Mammary epithelial cell (primary cell): ENCODE measurements at regions of chr11 and their contacts with region 1.

Region 1: DNA sequence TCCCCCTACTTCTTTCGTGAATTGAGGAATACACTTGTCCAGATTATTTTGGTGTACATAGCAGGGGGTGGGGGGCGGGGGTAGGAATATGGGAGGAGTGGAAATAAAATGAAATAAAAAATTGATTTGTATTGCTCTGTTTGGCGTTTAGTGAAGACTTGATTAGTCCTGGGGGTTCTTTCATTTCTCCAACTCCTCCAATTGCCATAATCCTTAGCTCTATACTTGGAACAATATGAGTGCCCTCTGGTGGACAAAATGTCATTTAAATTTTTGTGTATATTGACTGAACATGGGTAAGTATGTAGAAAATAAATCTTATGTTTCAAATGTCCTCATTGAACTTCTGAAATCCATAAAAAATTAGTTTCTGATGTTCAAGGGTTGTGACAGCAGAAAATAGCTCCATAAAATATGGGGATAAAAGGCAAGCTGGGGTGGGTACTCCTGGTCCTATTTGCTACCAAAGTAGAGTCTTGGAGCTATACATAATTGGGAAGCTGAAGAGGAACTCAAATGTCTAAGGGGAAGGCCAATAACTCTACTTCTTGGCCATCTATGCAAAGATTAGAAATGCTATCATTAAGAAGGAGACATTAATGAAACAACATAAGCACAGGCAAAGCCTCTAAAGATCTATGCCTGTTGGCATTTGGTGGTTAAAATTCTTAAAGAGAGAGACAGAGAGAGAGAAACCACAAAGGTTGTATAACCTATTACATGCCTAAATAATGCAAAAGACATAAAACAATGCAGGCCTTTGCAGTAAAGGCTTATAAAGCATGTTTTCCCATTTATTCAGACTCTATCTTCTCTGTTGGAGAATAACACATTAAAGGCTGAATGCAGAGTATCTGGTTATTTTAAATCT is 421.6 kb downstream of the METTL15 start:
- DNase-seq: peak; percentile 42
- H3K4me3 ChIP-seq: no peak overlapping the region
- H3K27ac ChIP-seq: no peak overlapping the region
- H3K4me1 ChIP-seq: no peaks in the 10 kb centered on the region
- H3K27me3 ChIP-seq: no peaks in the 10 kb centered on the region
- CTCF ChIP-seq: peak; percentile 41 to 54

Region 2: GRCh38 chr11:27705873-27706820 is 823.6 kb before region 1 on chr11:
- CTCF ChIA-PET with region 1: no interaction called
- dilution Hi-C with region 1: no loop called
- in situ Hi-C with region 1: loop called in 1 of 2 experiments (anchors 25 kb)
- intact Hi-C with region 1: no loop called
- DNase-seq: no peak
- H3K4me3 ChIP-seq: no peak overlapping the region
- H3K27ac ChIP-seq: no peak overlapping the region
- H3K4me1 ChIP-seq: peaks cover under 1% of the 10 kb centered on the region
- H3K27me3 ChIP-seq: peaks cover 3% of the 10 kb centered on the region
- CTCF ChIP-seq: peak; percentile 75 to 76

Region 3: GRCh38 chr11:27839226-27839870 is 690.4 kb before region 1 on chr11:
- CTCF ChIA-PET with region 1: no interaction called
- dilution Hi-C with region 1: no loop called
- in situ Hi-C with region 1: no loop called
- intact Hi-C with region 1: loop called (anchors 5 kb)
- DNase-seq: no peak
- H3K4me3 ChIP-seq: no peak overlapping the region
- H3K27ac ChIP-seq: no peak overlapping the region
- H3K4me1 ChIP-seq: no peaks in the 10 kb centered on the region
- H3K27me3 ChIP-seq: no peaks in the 10 kb centered on the region
- CTCF ChIP-seq: peak; percentile 49 to 54

Region 4: DNA sequence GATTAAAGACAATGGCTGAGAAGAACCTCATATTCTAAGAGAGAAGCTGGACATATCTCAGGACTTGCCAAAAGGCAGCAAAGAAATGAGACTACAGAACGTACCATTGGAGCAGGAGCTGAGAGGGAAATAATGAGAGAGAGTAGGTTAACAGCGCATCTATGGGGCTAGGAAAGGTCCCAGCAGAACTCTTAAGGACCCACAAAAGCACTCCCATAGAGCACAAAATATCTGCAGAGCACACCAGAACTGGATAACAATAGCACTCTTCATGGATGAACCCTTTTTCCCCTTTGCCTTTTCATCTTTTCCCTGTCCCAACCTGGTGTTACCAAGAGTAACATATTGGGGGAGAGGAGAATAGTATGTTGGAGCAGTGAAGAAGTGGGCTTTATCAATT is 175.8 kb before region 1 on chr11:
- CTCF ChIA-PET with region 1: interaction called, 18 read pairs
- dilution Hi-C with region 1: no loop called
- in situ Hi-C with region 1: no loop called
- intact Hi-C with region 1: no loop called
- DNase-seq: no peak
- H3K4me3 ChIP-seq: no peak overlapping the region
- H3K27ac ChIP-seq: no peak overlapping the region
- H3K4me1 ChIP-seq: no peaks in the 10 kb centered on the region
- H3K27me3 ChIP-seq: no peaks in the 10 kb centered on the region
- CTCF ChIP-seq: no peak

Region 5: GRCh38 chr11:28417601-28418323 is 112.0 kb before region 1 on chr11:
- CTCF ChIA-PET with region 1: no interaction called
- dilution Hi-C with region 1: no loop called
- in situ Hi-C with region 1: no loop called
- intact Hi-C with region 1: no loop called
- DNase-seq: no peak
- H3K4me3 ChIP-seq: no peak overlapping the region
- H3K27ac ChIP-seq: no peak overlapping the region
- H3K4me1 ChIP-seq: no peaks in the 10 kb centered on the region
- H3K27me3 ChIP-seq: peaks cover 2% of the 10 kb centered on the region
- CTCF ChIP-seq: no peak

Region 6: DNA sequence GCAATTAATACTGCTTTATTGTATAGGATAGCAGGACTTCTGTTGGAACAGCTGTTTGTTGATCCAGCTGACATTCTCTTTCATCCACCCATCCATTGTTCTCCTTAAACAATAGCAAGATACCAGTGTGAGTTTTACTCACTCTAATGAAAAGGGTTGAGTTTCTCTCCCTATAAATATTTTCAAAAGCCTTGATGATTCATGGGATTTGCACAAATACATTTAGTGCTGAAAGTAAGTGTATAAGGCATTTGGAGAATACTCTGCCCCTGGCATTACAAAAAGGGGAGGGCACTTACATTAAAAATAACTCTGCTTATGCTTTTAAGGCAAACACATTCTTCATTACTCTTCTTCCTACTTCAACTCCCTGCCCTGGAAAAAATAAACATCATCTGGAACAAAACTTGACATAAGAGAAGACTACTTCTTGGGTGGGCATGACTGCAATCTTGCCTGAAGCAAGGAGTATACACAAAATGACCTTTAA is 213.3 kb after region 1 on chr11:
- CTCF ChIA-PET with region 1: no interaction called
- dilution Hi-C with region 1: no loop called
- in situ Hi-C with region 1: no loop called
- intact Hi-C with region 1: no loop called
- DNase-seq: peak; percentile 27
- H3K4me3 ChIP-seq: no peak overlapping the region
- H3K27ac ChIP-seq: no peak overlapping the region
- H3K4me1 ChIP-seq: peaks cover 10% of the 10 kb centered on the region
- H3K27me3 ChIP-seq: no peaks in the 10 kb centered on the region
- CTCF ChIP-seq: no peak

Region 7: DNA sequence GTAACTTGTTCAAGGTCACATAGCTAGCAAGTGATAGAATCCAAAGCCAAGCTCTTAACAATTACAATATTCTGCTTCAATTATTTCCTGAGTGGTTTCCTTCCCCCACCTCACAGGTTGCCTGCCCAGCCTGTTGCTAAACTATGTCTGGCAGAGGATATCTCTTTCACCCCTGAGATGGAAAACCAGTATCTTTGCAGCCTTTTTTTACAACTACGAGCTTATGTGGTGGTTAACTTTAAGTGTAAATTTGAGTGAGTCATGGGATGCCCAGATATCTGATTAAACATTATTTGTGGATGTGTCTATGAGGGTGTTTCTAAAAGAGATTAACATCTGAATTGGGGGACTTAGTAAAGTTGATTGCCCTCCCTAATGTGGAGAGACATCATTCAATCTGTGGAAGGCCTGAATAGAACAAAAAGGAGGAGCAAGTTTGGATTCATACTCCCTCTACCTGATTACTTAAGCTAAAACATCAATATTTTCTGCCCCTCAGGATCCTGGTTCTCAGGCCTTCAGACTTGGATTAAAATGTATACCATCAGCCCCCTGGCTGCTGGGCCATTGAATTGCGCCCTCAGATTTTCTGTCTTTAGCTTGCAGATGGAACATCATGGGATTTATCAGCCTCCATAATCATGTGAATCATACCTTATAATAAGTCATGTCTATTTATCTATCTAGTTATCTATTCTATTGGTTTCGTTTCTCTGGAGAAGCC is 490.3 kb after region 1 on chr11:
- CTCF ChIA-PET with region 1: no interaction called
- dilution Hi-C with region 1: no loop called
- in situ Hi-C with region 1: no loop called
- intact Hi-C with region 1: loop called (anchors 10 kb)
- DNase-seq: peak; percentile 21
- H3K4me3 ChIP-seq: no peak overlapping the region
- H3K27ac ChIP-seq: no peak overlapping the region
- H3K4me1 ChIP-seq: peaks cover 35% of the 10 kb centered on the region
- H3K27me3 ChIP-seq: no peaks in the 10 kb centered on the region
- CTCF ChIP-seq: peak; percentile 60 to 67

Region 8: GRCh38 chr11:29333993-29334775 is 804.4 kb after region 1 on chr11:
- CTCF ChIA-PET with region 1: no interaction called
- dilution Hi-C with region 1: no loop called
- in situ Hi-C with region 1: no loop called
- intact Hi-C with region 1: loop called (anchors 5 kb)
- DNase-seq: peak; percentile 48
- H3K4me3 ChIP-seq: no peak overlapping the region
- H3K27ac ChIP-seq: no peak overlapping the region
- H3K4me1 ChIP-seq: peaks cover 16% of the 10 kb centered on the region
- H3K27me3 ChIP-seq: no peaks in the 10 kb centered on the region
- CTCF ChIP-seq: peak; percentile 59 to 64